ENCODE measurements at regions of chr7 and their contacts with region 1.

Region 1: GRCh38 chr7:44587843-44588711 is 6.0 kb upstream of the TMED4 start:
- DNase-seq: peak; percentile 46 to 58 (median 55)
- H3K4me3 ChIP-seq: no peak overlapping the region
- H3K4me3 Mint-ChIP-seq: no peak overlapping the region
- H3K27ac ChIP-seq: no peak overlapping the region
- H3K27ac Mint-ChIP-seq: peak overlapping the region in 3 of 7 donors; percentile 21 to 26 (median 26)
- H3K4me1 ChIP-seq: peaks cover 2% of the 10 kb centered on the region in 2 donors
- H3K4me1 Mint-ChIP-seq: peaks cover 6% of the 10 kb centered on the region
- H3K27me3 ChIP-seq: no peaks in the 10 kb centered on the region
- H3K27me3 Mint-ChIP-seq: peaks cover 1 to 4% (median 3%) of the 10 kb centered on the region in 3 donors
- CTCF ChIP-seq: peak; percentile 81

Region 2: GRCh38 chr7:44921607-44922359 is 333.7 kb after region 1 on chr7:
- intact Hi-C with region 1: loop called (anchors 5 kb)
- DNase-seq: peak; percentile 81 to 83 (median 83)
- H3K4me3 ChIP-seq: no peak overlapping the region
- H3K4me3 Mint-ChIP-seq: no peak overlapping the region
- H3K27ac ChIP-seq: no peak overlapping the region
- H3K27ac Mint-ChIP-seq: peak overlapping the region in 2 of 7 donors; percentile 21 to 80
- H3K4me1 ChIP-seq: peaks cover 0 to 6% of the 10 kb centered on the region in 2 donors
- H3K4me1 Mint-ChIP-seq: peaks cover 5% of the 10 kb centered on the region
- H3K27me3 ChIP-seq: no peaks in the 10 kb centered on the region
- H3K27me3 Mint-ChIP-seq: peaks cover 0 to 3% (median 0%) of the 10 kb centered on the region in 3 donors
- CTCF ChIP-seq: peak; percentile 89

Measured in CD14-positive monocyte (primary cell).